Lower leg skin (tissue), 4 donors: ENCODE measurements at regions of chr1 and their contacts with region 1.

Region 1: DNA sequence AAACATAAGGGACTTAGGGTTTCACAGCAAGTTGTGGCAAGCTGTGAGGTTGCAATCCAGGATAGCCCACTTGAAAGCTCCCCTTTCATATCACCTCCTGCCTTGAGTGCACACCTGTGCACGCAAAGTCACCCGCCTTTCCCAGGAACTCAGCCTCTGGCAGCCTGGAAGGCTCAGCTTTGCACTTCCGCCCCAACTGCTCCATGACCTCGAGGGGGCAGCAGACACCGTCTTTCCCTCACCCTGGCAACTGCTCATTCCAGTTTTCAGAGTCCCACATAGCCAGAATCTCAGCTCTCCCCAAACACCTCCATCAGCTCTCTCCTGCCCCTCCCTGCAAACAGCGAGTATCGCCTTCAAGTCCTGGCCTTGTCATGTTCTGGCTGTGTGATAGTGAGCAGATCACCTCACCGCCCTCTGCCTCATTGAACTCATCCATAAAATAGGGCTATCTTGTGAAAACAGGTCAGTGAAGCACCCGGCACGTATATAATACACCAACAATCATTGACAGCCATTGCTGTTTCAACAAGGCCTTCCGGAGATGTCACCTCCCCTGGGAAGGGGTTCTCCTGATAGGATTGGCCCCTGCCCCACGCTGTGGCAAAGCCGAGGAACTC is 32.2 kb upstream of the EPB41 start:
- DNase-seq: peak; percentile 85 to 96
- H3K4me3 ChIP-seq: no peak overlapping the region
- CTCF ChIP-seq: peak in 1 of 3 donors; percentile 90
- POLR2A ChIP-seq: no peak

Region 2: DNA sequence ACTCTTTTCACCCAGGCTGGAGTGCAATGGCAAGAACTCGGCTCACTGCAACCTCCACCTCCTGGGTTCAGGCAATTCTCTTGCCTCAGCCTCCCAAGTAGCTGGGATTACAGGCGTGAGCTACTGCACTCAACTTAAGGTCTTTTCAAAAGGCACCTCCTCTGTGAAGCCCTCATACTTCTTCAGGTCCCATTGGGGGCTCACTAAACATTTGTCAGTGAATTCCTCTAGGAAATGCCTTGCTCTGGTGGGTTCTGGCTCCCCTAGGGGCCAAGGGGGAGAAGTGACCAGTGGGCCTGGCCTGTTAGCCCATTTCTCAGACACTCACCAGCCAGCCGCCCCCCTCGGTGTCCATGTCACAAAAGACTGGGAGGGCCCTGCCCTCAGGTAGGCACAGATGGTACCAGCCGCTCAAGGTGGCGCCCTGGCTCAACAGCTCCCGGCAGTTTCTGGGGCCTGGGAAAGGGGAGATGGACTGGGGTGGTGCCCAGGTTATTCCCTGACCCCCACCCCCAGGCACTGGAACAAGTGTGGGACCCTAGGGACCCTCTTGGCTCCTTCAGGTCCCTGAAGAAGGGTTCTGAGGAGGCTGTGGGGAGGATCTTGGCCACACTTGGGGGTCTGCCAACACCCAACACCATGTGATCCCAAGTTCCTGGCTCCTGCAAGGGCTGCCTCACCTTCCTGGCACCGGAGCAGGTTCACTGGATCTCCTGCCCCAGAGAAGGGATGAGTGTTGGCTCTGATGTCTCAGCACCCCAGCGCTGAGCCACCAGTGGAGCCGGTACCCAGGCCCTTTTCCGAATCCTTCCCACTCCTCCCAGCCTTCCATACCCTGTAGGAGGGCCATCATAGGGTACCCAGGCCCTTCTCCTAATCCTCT is 1509.1 kb before region 1 on chr1:
- intact Hi-C with region 1: no loop called
- DNase-seq: no peak
- H3K4me3 ChIP-seq: no peak overlapping the region
- CTCF ChIP-seq: no peak
- POLR2A ChIP-seq: no peak

Region 3: DNA sequence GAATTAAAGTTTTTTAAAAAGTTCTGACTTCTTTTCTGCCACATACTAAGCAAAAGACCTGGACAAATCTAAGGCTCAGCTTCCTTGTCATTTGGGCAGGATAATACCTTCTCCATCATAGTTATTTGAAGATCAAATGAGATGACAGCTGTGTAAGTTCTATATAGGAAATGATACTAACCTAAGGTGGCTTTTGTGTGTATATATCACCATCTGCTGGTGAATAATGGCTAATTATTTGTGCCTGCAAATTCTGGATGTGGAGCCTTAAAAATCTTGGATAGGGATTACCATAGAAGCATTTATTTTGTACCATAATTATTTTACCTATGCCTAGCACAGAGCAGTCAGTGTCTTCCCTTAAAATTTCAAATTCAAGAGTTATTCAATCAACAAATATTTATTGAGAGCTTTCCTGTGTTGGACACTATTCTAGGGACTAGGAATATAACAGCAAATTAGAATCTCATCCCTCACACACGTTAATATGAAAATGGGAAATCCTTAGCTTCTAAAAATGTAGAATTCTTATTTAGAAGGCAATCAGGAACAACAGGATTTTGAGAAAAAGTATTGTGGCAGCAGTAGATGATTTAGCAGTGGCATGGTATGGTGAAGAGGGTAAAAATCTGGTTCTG is 151.8 kb after region 1 on chr1:
- intact Hi-C with region 1: loop called (anchors 5 kb)
- DNase-seq: no peak
- H3K4me3 ChIP-seq: no peak overlapping the region
- CTCF ChIP-seq: peak in 1 of 3 donors; percentile 37
- POLR2A ChIP-seq: no peak